Activated B cell treated with CpG ODN at 0.5 μM for 24 hours (primary cell): ENCODE measurements at regions of chr4 and their contacts with region 1.

Region 1: DNA sequence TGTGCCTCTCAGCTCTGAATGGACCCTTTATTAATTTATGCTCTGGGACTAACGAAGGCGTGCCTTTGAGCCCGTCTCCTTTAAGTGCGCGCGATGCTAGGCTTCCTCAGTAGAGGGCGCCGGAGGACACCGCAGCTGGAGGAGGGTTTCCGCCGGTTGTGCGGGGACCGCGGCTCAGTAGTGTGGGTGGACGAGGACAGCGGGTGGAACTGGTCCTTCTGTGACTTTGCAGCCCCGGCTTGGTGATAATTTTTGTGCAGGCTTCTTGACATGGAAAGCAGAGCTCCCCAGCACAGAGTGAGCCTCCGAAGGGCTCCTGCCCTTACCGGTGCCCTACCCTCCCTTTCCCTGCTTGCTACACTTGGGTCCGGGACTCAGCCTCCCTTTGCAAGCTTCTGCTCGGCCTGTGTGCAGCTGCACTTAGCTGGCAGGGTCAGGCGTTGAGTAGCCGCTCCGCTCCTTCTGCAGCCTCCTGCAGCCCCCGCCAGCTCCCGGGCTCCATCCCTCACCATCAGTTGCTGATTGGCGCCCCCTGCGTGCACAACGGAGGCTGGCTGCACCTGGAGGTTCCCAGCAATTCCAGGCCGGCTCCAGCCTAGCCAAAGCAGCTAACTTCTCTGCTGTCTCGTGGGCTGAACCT is 26.8 kb upstream of the BOD1L1 start:
- DNase-seq: peak; percentile 71
- ATAC-seq: peak; percentile 93
- H3K4me3 Mint-ChIP-seq: peak overlapping the region; percentile 85
- H3K27ac Mint-ChIP-seq: no peak overlapping the region
- H3K4me1 Mint-ChIP-seq: peaks cover 13% of the 10 kb centered on the region
- H3K27me3 Mint-ChIP-seq: peaks cover 6% of the 10 kb centered on the region
- CTCF ChIP-seq: peak; percentile 43

Region 2: DNA sequence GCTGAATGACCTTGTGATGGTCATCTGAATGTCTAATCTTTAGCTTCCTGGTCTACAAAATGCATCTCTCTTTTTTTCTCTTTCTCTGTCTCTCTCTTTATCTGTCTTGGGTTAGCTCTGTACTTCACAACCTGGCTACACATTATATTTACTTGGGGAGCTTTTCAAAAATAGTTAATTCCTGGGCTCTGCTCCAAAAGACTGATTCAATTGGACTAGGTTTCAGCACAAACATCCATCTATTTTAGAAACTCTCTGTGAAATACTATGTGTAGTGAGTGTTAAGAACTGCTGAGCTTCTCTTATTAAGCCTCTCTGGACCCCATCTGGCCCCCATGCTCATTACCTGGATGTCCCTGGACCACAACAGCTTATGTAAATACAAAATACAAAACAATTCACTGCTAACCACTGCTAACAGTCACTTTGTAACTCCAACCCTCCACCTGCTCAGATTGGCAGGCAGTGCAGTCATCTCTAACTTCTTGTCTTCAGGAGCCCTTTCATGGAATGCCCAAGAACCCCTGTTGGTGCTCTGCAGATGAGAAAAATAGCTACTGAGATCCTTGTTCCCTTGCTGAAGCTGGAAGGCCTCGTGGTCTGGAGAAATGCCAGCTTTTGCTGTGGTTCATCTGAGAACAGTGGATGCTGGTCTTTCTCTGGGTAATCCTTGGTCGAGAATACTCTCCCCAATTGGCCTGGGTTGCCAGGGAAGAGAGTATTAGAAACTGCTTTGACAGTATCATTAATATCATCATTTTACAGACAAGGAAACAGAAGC is 11.9 kb before region 1 on chr4:
- CTCF ChIA-PET with region 1: interaction called, 12 read pairs
- POLR2A ChIA-PET with region 1: no interaction called
- intact Hi-C with region 1: no loop called
- DNase-seq: no peak
- ATAC-seq: no peak
- H3K4me3 Mint-ChIP-seq: no peak overlapping the region
- H3K27ac Mint-ChIP-seq: no peak overlapping the region
- H3K4me1 Mint-ChIP-seq: no peaks in the 10 kb centered on the region
- H3K27me3 Mint-ChIP-seq: peaks cover 26% of the 10 kb centered on the region
- CTCF ChIP-seq: no peak

Region 3: DNA sequence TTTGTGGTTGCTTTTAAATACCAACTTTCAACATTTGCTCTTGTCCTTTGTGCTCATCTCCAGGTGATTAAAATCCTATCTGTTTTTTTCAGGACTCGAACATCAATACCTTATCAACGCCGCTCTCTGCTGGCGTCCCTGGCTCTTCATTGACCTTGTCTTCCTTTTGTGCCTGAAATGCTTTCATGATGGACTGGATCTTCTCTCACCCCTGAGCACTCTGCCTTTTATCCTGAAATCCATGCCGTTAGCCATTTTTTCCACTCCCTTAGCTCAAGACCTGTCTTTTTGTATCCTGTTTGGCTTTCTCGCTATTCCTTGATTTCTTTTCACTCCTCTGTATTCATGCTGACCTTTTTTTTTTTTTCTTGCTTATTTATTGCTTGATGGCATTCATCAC is 798.5 kb after region 1 on chr4:
- CTCF ChIA-PET with region 1: no interaction called
- POLR2A ChIA-PET with region 1: no interaction called
- intact Hi-C with region 1: loop called (anchors 10 kb)
- DNase-seq: no peak
- ATAC-seq: no peak
- H3K4me3 Mint-ChIP-seq: no peak overlapping the region
- H3K27ac Mint-ChIP-seq: no peak overlapping the region
- H3K4me1 Mint-ChIP-seq: no peaks in the 10 kb centered on the region
- H3K27me3 Mint-ChIP-seq: no peaks in the 10 kb centered on the region
- CTCF ChIP-seq: no peak

Region 4: GRCh38 chr4:14787894-14788293 is 1133.6 kb after region 1 on chr4:
- CTCF ChIA-PET with region 1: interaction called, 21 read pairs
- POLR2A ChIA-PET with region 1: no interaction called
- intact Hi-C with region 1: loop called (anchors 1 kb)
- DNase-seq: no peak
- ATAC-seq: peak; percentile 70
- H3K4me3 Mint-ChIP-seq: no peak overlapping the region
- H3K27ac Mint-ChIP-seq: no peak overlapping the region
- H3K4me1 Mint-ChIP-seq: no peaks in the 10 kb centered on the region
- H3K27me3 Mint-ChIP-seq: peaks cover 8% of the 10 kb centered on the region
- CTCF ChIP-seq: no peak

Region 5: GRCh38 chr4:15231265-15232091 is 1577.2 kb after region 1 on chr4:
- CTCF ChIA-PET with region 1: interaction called, 4 read pairs
- POLR2A ChIA-PET with region 1: no interaction called
- intact Hi-C with region 1: loop called (anchors 1 kb)
- DNase-seq: peak; percentile 24
- ATAC-seq: peak; percentile 79
- H3K4me3 Mint-ChIP-seq: no peak overlapping the region
- H3K27ac Mint-ChIP-seq: no peak overlapping the region
- H3K4me1 Mint-ChIP-seq: peaks cover 21% of the 10 kb centered on the region
- H3K27me3 Mint-ChIP-seq: peaks cover 2% of the 10 kb centered on the region
- CTCF ChIP-seq: peak; percentile 70

Region 6: DNA sequence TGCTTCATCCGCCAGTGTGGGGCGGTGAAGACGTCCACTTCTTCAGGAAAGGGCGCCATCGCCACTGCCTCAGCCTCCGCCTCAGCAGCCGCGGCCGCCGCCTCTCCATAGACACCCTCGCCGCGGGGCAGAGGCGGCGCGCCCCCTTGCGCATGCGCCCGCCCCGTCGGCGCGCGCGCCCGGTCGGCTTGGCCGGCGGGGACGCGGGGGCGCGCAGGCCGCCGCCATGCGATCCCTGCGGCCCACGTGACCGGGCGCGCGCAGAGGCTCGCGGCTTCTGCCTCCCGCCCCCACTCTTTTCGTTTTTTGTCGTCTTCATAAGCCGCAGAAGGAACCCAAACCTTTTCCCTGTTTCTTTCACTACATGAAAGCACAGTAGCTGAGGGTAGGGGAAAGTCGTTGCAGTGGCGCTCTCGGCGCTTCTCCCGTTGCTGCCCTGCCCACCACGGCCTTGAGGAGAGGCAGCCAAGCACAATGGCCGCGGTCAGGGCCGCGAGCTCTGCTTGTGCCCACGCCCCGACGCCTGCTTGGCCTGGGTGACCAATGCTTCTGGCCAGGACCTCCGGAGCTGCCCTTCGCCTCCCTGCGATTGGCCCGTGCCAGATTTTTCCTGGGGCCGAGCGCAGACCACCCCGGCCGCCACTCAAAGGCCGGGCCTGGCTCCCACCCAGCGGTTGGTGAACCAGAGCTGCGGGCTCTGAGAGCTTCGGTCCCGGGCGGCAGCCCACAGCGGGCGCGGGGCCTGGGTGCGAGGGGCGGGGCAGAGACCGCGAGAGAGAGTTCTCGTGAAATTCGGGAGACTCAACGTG is 2001.2 kb after region 1 on chr4 and contains the start of gene FBXL5:
- CTCF ChIA-PET with region 1: no interaction called
- POLR2A ChIA-PET with region 1: no interaction called
- intact Hi-C with region 1: loop called (anchors 2 kb)
- DNase-seq: peak; percentile 89
- ATAC-seq: peak; percentile 82
- H3K4me3 Mint-ChIP-seq: peak within 1 kb of the TSS; percentile 95
- H3K27ac Mint-ChIP-seq: peak within 1 kb of the TSS; percentile 97
- H3K4me1 Mint-ChIP-seq: peaks cover 42% of the 10 kb centered on the region
- H3K27me3 Mint-ChIP-seq: no peaks in the 10 kb centered on the region
- CTCF ChIP-seq: no peak
- total RNA-seq, gene FBXL5: 29.9 and 32.1 TPM in 2 replicates